Posterior vena cava (tissue), 2 donors: ENCODE measurements at regions of chr10 and their contacts with region 1.

Region 1: GRCh38 chr10:72637398-72637857 is 11.5 kb upstream of the MICU1 start:
- DNase-seq: no peak

Region 2: DNA sequence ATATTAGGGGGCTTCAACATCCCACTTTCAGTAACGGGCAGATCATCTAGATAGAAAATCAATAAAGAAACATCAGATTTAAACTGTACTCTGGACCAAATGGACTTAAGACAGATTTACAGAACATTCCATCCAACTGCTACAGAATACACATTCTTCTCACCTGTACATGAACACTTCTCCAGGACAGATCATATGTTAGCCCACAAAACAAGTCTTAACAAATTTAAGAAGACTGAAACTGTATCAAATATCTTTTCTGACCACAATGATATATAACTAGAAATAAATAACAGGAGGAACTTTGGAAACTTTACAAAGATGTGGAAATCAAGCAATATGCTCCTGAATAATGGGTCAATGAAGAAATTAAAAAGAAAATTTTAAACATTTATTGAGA is 98.3 kb before region 1 on chr10:
- intact Hi-C with region 1: no loop called
- DNase-seq: no peak

Region 3: DNA sequence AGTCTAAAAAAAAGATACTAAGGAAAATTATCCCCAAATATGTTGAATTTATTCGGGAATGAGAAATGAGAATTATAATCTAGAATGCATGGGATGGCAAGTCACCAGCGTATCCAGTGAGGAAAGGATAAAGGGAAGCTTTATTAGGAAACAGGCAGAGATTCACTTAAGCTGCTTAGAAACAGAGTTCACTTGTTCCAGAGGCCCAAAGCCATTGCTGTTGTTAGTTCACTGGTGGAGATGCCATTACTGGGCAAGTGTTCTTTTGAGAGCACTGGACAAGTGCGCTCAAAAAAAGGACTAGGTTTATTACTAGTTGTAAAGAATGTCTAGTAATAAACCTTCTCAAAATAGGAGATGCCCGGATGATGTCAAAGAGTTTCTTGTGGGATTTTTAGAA is 62.8 kb before region 1 on chr10:
- intact Hi-C with region 1: no loop called
- DNase-seq: no peak

Region 4: GRCh38 chr10:72649291-72649690 is 11.9 kb after region 1 on chr10:
- intact Hi-C with region 1: no loop called
- DNase-seq: no peak

Region 5: GRCh38 chr10:73467206-73467605 is 829.8 kb after region 1 on chr10:
- intact Hi-C with region 1: no loop called
- DNase-seq: no peak

Region 6: DNA sequence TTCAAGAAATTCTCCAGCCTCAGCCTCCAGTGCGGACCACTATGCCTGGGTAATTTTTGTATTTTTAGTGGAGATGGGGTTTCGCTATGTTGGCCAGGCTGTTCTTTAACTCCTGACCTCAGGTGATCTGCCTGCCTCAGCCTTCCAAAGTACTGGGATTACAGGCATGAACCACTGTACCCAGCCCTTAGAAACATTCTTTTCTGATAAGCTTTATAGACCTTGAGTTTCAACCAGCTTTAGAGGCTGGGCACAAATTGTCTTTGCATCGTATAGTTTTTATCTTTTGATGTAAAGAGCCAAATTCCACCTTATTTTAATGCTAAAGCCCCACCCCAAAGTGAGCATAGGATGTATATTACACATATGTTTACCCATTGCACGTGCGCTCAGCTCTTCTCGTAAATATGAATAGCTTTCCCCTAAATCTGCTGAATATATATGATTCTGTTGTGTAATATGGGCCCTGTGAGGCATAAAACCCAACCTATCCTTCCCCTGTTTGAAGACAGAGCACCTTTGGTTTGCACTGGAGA is 1638.4 kb after region 1 on chr10:
- intact Hi-C with region 1: loop called in 1 of 2 experiments (anchors 5 kb)
- DNase-seq: no peak